Esophagus muscularis mucosa (tissue), 4 donors: ENCODE measurements at regions of chr12 and their contacts with region 1.

Region 1: GRCh38 chr12:57238854-57239554 is 9.5 kb downstream of the SHMT2 start:
- DNase-seq: peak; percentile 96
- H3K4me3 ChIP-seq: peak overlapping the region; percentile 58 to 59 (median 59)
- H3K27ac ChIP-seq: no peak overlapping the region
- H3K4me1 ChIP-seq: peaks cover 58 to 78% (median 71%) of the 10 kb centered on the region in 4 donors
- H3K27me3 ChIP-seq: peaks cover 15 to 95% (median 57%) of the 10 kb centered on the region in 4 donors
- CTCF ChIP-seq: peak in 2 of 3 experiments; percentile 100
- EP300 ChIP-seq: no peak
- POLR2A ChIP-seq: no peak

Region 2: DNA sequence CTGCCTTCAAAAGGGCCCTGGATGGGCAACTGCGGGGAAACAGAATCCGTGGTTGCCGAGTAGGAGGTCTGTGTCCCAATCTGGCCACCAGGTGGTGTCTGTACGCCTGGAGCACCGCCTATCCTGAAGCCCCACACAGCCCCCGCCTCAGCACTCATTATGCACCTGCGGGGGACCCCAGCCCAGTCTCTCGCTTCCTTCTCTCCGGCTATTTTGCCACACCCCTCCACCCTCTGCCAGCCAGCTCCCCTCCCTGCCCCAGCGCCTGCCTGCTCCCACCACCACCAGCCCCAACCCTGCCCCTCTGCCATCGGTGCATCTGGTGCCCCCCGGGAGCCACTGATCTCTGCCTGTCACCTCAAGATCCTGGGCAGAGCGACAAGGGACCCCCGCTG is 24.6 kb before region 1 on chr12:
- intact Hi-C with region 1: loop called (anchors 1 kb)
- DNase-seq: no peak
- H3K4me3 ChIP-seq: no peak overlapping the region
- H3K27ac ChIP-seq: no peak overlapping the region
- H3K4me1 ChIP-seq: peaks cover 39 to 53% (median 50%) of the 10 kb centered on the region in 4 donors
- H3K27me3 ChIP-seq: peaks cover 5 to 57% (median 42%) of the 10 kb centered on the region in 4 donors
- CTCF ChIP-seq: peak; percentile 66 to 80 (median 68)
- EP300 ChIP-seq: no peak
- POLR2A ChIP-seq: no peak